Posterior cingulate gyrus (tissue), 11 donors: ENCODE measurements at regions of chr7 and their contacts with region 1.

Region 1: GRCh38 chr7:139588632-139589031 is 65.1 kb downstream of the CLEC2L start:
- DNase-seq: peak in 1 of 10 donors; percentile 20

Region 2: GRCh38 chr7:139441961-139442360 is 146.7 kb before region 1 on chr7:
- intact Hi-C with region 1: loop called (anchors 10 kb)
- DNase-seq: peak in 2 of 10 donors; percentile 29 to 40